GM13976 (cell line): ENCODE measurements at regions of chr18 and their contacts with region 1.

Region 1: DNA sequence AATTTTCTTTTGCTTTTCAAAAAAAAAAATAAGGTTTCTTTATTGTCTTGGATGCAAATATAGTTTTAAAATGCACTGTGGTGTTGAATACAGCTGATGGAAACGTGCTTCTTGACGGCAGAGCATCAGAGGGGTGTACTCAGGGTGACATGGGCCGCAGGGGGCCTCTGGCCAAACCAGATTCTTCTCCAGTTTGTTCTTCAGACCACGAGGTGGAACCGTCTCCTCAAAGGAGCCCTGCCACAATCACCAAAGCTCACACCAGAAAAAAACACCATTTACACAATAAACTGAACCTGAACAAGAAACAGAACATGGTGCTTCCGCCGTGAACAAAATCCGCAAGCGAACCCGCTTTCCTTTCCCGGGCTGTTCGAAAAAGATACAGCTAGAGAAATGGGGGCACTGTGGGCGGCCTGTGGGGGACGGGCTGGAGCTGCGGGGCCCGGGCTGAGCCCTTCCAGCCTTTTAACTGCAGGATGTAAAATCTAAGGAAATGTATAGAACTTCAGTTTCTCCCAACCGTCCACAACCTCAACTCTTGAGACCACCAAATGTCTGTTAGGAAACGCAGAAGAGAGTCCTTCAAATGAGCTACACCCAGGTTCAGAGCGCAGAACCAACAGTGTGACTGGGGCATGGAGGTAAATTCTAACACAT is 34.5 kb downstream of the PSMG2 start:
- DNase-seq: no peak
- CTCF ChIP-seq: no peak

Region 2: GRCh38 chr18:12777500-12777944 is 40.1 kb after region 1 on chr18:
- in situ Hi-C with region 1: no loop called
- DNase-seq: no peak
- CTCF ChIP-seq: no peak

Region 3: GRCh38 chr18:13159579-13159978 is 422.2 kb after region 1 on chr18:
- in situ Hi-C with region 1: loop called (anchors 10 kb)
- DNase-seq: peak; percentile 76
- CTCF ChIP-seq: peak; percentile 69